ENCODE measurements at regions of chr2 and their contacts with region 1.

Region 1: GRCh38 chr2:218953481-218953881 is 6.0 kb upstream of the CDK5R2 start:
- DNase-seq: no peak
- ATAC-seq: no peak
- H3K4me3 ChIP-seq: no peak overlapping the region
- H3K4me3 Mint-ChIP-seq: no peak overlapping the region
- H3K27ac ChIP-seq: no peak overlapping the region
- H3K27ac Mint-ChIP-seq: no peak overlapping the region
- H3K4me1 ChIP-seq: no peaks in the 10 kb centered on the region
- H3K4me1 Mint-ChIP-seq: no peaks in the 10 kb centered on the region
- H3K27me3 ChIP-seq: peaks cover 0 to 7% of the 10 kb centered on the region in 2 experiments
- H3K27me3 Mint-ChIP-seq: peaks cover 61% of the 10 kb centered on the region
- CTCF ChIP-seq: no peak

Region 2: GRCh38 chr2:218312267-218312756 is 641.2 kb before region 1 on chr2:
- CTCF ChIA-PET with region 1: no interaction called
- POLR2A ChIA-PET with region 1: no interaction called
- intact Hi-C with region 1: loop called in 1 of 2 experiments (anchors 5 kb)
- DNase-seq: no peak
- ATAC-seq: no peak
- H3K4me3 ChIP-seq: no peak overlapping the region
- H3K4me3 Mint-ChIP-seq: no peak overlapping the region
- H3K27ac ChIP-seq: no peak overlapping the region
- H3K27ac Mint-ChIP-seq: peak overlapping the region; percentile 55
- H3K4me1 ChIP-seq: peaks cover 20% of the 10 kb centered on the region
- H3K4me1 Mint-ChIP-seq: peaks cover 29% of the 10 kb centered on the region
- H3K27me3 ChIP-seq: no peaks in the 10 kb centered on the region
- H3K27me3 Mint-ChIP-seq: no peaks in the 10 kb centered on the region
- CTCF ChIP-seq: no peak

Region 3: GRCh38 chr2:218927422-218927821 is 26.1 kb before region 1 on chr2:
- CTCF ChIA-PET with region 1: no interaction called
- POLR2A ChIA-PET with region 1: no interaction called
- intact Hi-C with region 1: no loop called
- DNase-seq: no peak
- ATAC-seq: no peak
- H3K4me3 ChIP-seq: no peak overlapping the region
- H3K4me3 Mint-ChIP-seq: no peak overlapping the region
- H3K27ac ChIP-seq: no peak overlapping the region
- H3K27ac Mint-ChIP-seq: no peak overlapping the region
- H3K4me1 ChIP-seq: no peaks in the 10 kb centered on the region
- H3K4me1 Mint-ChIP-seq: no peaks in the 10 kb centered on the region
- H3K27me3 ChIP-seq: peaks cover 0 to 1% of the 10 kb centered on the region in 2 experiments
- H3K27me3 Mint-ChIP-seq: peaks cover 43% of the 10 kb centered on the region
- CTCF ChIP-seq: no peak

Measured in CD8-positive, alpha-beta T cell (primary cell).